ENCODE measurements at regions of chr10 and their contacts with region 1.

Region 1: GRCh38 chr10:80487791-80488538 is 33.9 kb downstream of the TSPAN14 start:
- DNase-seq: peak; percentile 82
- H3K4me3 Mint-ChIP-seq: peak overlapping the region; percentile 72
- H3K27ac Mint-ChIP-seq: peak overlapping the region; percentile 95
- H3K4me1 Mint-ChIP-seq: peaks cover 98% of the 10 kb centered on the region
- H3K27me3 Mint-ChIP-seq: no peaks in the 10 kb centered on the region

Region 2: DNA sequence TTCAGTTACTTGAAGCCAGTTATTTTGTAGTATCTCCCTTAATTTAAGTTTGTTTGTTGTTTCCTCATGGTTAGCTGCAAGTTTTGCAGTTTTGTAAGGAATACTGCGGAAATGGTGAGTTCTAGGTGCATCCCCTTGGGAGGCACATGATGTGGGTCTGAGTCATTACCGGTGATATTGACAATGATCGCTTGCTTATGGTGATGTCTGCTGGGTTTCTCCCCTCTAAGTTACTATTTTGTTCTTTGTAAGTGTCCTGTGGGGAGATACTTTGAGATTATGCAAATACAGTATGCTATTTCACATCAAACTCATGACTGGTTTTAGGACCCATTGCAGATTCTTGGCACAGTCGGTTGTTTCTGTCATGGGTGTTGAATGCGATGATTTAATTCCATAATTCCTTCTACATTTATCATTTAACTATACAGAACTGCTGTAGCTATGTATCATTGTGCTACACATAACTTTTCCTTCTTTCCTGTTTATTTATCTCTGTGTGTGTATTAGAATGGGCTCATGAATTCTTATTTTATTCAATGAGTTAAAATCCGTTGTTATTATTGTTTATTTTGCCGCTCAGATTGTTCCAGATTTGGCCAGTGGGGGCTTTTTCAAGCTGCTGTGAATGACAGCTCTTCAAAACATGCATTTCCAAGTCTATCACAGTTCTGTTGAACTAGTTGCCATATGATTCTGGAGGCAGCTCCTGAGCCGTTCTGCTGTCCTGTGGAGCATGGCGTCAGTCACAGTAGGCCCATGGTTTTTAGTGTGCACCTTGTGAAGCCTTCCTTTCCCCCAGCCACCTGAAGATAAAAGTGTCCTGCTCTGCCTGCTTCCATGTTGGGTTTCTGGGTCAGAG is 15.5 kb before region 1 on chr10:
- CTCF ChIA-PET with region 1: interaction called, 13 read pairs
- DNase-seq: no peak
- H3K4me3 Mint-ChIP-seq: peak overlapping the region; percentile 49
- H3K27ac Mint-ChIP-seq: peak overlapping the region; percentile 85
- H3K4me1 Mint-ChIP-seq: peaks cover 88% of the 10 kb centered on the region
- H3K27me3 Mint-ChIP-seq: no peaks in the 10 kb centered on the region

Region 3: DNA sequence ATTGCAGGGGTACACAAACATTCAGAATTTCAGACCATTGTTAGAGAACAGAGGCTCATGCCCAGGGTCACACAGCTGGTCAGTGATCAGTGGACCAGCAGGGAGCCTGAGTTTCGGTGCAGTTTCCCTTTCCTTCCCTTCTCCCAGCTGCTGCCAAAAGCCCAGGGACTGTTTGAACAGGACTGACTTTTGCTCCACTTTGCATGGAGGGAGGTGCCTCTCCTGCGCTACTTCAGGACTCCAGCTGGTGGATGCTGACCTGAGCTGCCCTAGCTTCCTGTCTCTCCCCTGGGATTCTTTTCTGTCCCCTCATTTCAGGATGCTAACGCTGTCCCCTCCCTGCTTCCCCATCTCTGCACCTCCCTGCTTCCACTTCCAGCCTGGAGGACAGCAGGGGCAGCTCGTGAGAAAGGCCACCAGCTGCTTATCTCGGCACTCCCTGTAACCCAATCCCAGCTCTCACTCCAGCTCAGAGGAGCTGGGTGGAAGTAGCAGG is 64.2 kb after region 1 on chr10:
- CTCF ChIA-PET with region 1: no interaction called
- DNase-seq: no peak
- H3K4me3 Mint-ChIP-seq: no peak overlapping the region
- H3K27ac Mint-ChIP-seq: no peak overlapping the region
- H3K4me1 Mint-ChIP-seq: no peaks in the 10 kb centered on the region
- H3K27me3 Mint-ChIP-seq: peaks cover 33% of the 10 kb centered on the region

Region 4: DNA sequence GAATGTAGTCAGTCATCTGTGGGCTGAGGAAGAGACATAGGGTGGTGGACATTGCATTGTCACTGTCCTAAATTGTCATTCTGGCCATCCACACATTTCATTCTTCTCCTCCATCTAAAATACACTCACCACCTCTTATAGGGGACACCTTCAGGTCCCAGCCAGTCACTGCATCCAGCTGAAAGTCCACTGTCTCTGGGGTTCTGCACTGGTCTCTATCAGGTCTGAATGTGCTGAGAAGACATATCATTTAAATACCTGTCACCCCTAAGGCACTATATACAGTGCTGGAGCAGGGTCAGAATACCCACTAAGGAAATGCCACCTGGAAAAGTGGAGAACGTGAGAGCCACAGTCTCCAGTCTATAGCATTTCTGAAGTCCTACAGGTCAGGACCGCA is 79.3 kb after region 1 on chr10:
- CTCF ChIA-PET with region 1: no interaction called
- DNase-seq: no peak
- H3K4me3 Mint-ChIP-seq: no peak overlapping the region
- H3K27ac Mint-ChIP-seq: no peak overlapping the region
- H3K4me1 Mint-ChIP-seq: no peaks in the 10 kb centered on the region
- H3K27me3 Mint-ChIP-seq: peaks cover 26% of the 10 kb centered on the region